Ovary (tissue), 10 donors: ENCODE measurements at regions of chr1 and their contacts with region 1.

Region 1: DNA sequence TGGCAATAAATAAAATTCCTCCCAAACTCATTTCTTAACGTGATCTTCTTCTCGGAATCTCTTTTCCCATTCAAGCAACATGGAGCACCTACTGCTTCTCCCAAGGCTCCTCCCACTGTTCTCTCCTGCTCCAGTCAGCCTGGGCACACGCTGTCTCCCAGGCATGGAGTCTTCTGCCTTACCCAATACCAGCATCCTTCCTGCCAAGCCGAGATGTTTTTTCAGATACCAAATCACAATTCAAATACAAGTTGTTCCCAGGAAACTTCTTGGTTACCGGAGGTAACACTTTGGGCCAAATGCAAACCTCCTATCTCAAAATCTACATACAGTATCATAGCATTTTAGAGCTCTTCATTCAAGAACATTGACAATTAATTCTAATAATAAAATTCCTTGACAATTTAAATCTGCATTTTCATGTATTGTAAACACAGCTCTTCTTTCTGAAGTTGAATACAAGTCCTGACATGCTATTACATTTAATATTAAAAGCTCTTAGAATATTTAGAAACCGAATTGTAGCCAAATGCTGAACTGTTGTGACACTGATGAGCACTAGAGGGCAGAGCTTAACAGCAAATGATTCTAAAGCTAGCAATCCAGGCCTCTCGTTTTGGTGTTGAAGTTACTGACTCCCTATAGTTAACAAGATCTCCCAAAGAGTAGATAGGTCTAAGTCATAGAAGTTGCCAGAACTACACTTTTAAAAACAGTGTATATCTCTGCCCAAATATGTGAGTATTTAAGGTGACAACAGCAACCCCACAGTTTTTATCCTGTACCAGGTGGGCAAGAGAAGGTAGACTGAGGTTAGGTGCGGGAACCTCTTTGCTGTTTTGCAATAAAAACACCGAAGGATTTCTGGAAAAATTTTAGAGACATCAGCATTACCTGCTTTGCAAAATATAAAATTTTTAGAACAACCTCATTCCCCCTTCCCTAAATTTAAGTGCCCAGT is 52.3 kb downstream of the BCAR3 start:
- DNase-seq: peak in 1 of 5 donors; percentile 64
- H3K4me3 ChIP-seq: no peak overlapping the region
- H3K27ac ChIP-seq: no peak overlapping the region
- H3K4me1 ChIP-seq: peaks cover 3% of the 10 kb centered on the region
- H3K27me3 ChIP-seq: no peaks in the 10 kb centered on the region
- CTCF ChIP-seq: peak; percentile 62 to 92 (median 85)
- EP300 ChIP-seq: no peak
- POLR2A ChIP-seq: no peak

Region 2: GRCh38 chr1:93680757-93681550 is 51.6 kb after region 1 on chr1:
- intact Hi-C with region 1: loop called in 1 of 4 experiments (anchors 2 kb)
- DNase-seq: peak; percentile 84 to 92 (median 87)
- H3K4me3 ChIP-seq: peak overlapping the region; percentile 70
- H3K27ac ChIP-seq: peak overlapping the region; percentile 72 to 90
- H3K4me1 ChIP-seq: peaks cover 7% of the 10 kb centered on the region
- H3K27me3 ChIP-seq: no peaks in the 10 kb centered on the region
- CTCF ChIP-seq: peak in 2 of 3 donors; percentile 79 to 81
- EP300 ChIP-seq: no peak
- POLR2A ChIP-seq: peak; percentile 38

Region 3: DNA sequence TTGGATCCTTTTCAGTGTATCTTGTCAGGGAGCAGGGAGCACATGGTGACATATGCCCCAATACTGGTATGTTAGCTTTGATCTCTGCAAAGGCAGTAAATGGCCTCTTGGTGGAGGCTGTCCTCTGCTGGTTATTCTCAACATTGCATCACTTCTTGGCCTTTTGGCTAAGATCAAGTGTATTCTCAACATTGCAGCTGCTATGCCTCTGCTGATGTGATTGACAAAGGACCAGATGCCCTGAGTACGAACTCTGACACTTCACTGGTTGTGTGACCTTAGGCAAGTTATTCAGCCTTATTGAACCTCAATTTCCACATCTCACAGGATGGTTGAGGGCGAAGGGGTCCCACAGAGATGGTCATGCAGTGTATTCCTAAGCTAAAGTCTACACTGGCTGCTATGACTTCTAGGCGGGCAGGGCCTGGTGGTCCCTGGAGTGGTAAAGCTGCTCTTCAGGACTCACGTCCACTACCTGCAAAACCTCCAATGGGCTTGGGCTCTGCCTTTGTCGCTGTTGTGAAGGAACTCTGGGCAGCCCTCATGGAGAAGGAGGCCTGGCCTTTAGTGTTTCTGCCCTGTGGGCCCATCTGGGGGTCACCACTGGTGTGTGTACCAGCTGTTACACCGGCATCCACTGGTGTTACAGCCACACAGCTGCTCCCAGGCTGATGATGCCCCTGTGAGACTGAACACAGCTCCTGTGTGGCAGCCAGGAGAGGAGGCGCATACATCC is 184.8 kb after region 1 on chr1:
- intact Hi-C with region 1: loop called (anchors 1 to 5 kb)
- DNase-seq: peak; percentile 32 to 67 (median 39)
- H3K4me3 ChIP-seq: no peak overlapping the region
- H3K27ac ChIP-seq: no peak overlapping the region
- H3K4me1 ChIP-seq: peaks cover 2% of the 10 kb centered on the region
- H3K27me3 ChIP-seq: no peaks in the 10 kb centered on the region
- CTCF ChIP-seq: peak; percentile 86 to 93 (median 92)
- EP300 ChIP-seq: no peak
- POLR2A ChIP-seq: no peak

Region 4: GRCh38 chr1:93846211-93846991 is 217.0 kb after region 1 on chr1:
- intact Hi-C with region 1: loop called in 3 of 4 experiments (anchors 5 to 10 kb)
- DNase-seq: peak; percentile 86 to 91 (median 89)
- H3K4me3 ChIP-seq: peak overlapping the region; percentile 88
- H3K27ac ChIP-seq: peak overlapping the region; percentile 97 to 99
- H3K4me1 ChIP-seq: peaks cover 4% of the 10 kb centered on the region
- H3K27me3 ChIP-seq: no peaks in the 10 kb centered on the region
- CTCF ChIP-seq: peak in 2 of 3 donors; percentile 20 to 37
- EP300 ChIP-seq: no peak
- POLR2A ChIP-seq: peak; percentile 77